IMR-90 (cell line): ENCODE measurements at regions of chr22 and their contacts with region 1.

Region 1: DNA sequence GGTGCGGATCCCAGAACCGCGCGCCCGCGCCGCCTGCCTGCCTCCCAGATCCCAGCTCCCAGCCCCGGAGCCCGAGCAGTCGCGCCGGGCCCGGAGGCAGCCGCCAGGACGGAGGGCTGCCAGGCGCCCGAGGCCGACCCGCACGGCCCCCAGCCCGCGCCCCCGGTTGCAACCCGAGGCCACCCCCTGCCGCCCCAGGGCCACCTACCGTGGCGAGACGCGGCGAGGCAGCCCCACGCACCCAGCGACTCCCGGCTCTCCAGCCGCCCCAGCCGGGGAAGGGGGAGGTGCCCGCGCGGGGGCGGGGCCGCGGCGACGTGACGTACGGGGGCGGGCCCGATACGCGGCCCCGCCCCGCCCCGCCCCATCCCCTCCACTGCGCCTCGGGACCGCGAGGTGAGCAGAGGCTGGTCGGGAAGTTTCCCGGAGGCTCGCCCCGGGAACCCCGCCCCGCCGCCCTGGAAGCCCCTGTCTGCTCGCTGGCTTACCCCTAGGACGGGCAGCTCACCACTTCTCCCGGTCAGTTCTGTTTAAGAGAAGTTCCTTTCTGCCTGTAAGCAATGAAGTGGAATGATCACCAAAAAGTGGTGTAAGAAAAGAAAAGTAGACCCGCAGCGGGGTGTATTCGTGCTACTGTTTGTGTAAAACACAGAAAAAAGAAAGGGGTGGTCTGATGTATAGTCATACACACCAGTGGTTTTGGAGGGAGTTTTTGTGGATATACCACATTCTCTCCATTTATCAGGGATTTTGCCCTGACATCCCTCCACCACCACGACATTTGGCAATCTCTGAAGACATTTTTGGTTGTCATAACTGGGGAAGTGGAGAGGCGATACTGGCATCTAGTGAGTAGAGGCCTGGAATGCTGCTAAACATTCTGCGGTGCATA is at the start of gene TPST2:
- DNase-seq: peak; percentile 65
- ATAC-seq: peak; percentile 97
- H3K4me3 ChIP-seq: peak within 1 kb of the TSS; percentile 95
- H3K27ac ChIP-seq: peak within 1 kb of the TSS; percentile 73
- H3K4me1 ChIP-seq: peaks cover 10% of the 10 kb centered on the region
- H3K27me3 ChIP-seq: peaks cover 9% of the 10 kb centered on the region
- CTCF ChIP-seq: no peak
- POLR2A ChIP-seq: peak; percentile 72
- RAD21 ChIP-seq: no peak
- total RNA-seq, gene TPST2: 41.7 and 42.5 TPM in 2 replicates

Region 2: GRCh38 chr22:26287382-26288225 is 302.5 kb before region 1 on chr22:
- CTCF ChIA-PET with region 1: no interaction called
- POLR2A ChIA-PET with region 1: no interaction called
- dilution Hi-C with region 1: no loop called
- in situ Hi-C with region 1: no loop called
- intact Hi-C with region 1: no loop called
- DNase-seq: no peak
- ATAC-seq: no peak
- H3K4me3 ChIP-seq: no peak overlapping the region
- H3K27ac ChIP-seq: no peak overlapping the region
- H3K4me1 ChIP-seq: no peaks in the 10 kb centered on the region
- H3K27me3 ChIP-seq: no peaks in the 10 kb centered on the region
- CTCF ChIP-seq: no peak
- POLR2A ChIP-seq: no peak
- RAD21 ChIP-seq: no peak

Region 3: DNA sequence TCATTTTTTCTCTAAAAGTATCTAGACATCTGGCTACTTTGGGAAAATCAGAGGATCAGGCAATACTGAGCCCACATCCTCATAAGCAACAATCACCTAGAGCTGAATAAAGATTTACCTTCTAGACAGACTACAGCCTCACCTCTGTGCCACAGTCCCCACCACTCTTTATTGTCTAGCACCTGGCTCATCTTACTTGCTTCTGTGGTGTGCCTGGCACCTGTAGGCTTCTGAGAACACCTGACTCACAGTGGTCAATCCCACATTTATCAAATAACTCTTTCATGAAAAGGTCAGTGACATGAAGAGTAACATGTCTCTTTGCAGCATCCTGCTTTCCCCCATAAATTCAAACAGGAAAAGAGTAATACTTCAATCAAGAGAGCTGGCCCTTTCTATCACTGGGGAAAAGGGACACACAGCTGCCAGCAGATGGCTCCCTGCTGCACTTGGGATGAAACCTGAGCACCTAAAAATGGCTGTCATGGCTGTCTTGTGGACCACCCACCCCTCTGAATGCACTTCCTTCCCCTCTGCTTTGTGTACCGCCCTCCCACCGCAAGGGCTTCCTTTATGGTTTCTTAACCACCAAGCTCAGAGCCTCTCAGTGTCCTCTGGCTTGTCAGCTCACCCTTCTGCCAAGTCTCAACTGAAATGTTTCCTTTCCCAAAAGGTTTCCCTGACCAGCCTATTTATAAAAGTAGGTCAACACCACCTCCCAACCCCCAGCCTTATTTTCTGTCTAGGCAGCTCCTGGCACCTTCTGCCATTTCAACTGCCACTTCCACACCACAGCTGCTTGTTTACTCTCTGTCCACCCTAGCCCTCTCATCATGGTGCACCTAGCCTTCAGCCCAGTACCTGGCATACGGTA is 87.2 kb before region 1 on chr22:
- CTCF ChIA-PET with region 1: interaction called, 4 read pairs
- POLR2A ChIA-PET with region 1: no interaction called
- dilution Hi-C with region 1: no loop called
- in situ Hi-C with region 1: no loop called
- intact Hi-C with region 1: loop called (anchors 5 kb)
- DNase-seq: peak; percentile 51
- ATAC-seq: peak; percentile 79
- H3K4me3 ChIP-seq: no peak overlapping the region
- H3K27ac ChIP-seq: no peak overlapping the region
- H3K4me1 ChIP-seq: no peaks in the 10 kb centered on the region
- H3K27me3 ChIP-seq: no peaks in the 10 kb centered on the region
- CTCF ChIP-seq: peak; percentile 56
- POLR2A ChIP-seq: no peak
- RAD21 ChIP-seq: peak; percentile 63

Region 4: GRCh38 chr22:26511857-26512793 is 78.0 kb before region 1 on chr22 and contains the start of gene TFIP11:
- CTCF ChIA-PET with region 1: no interaction called
- POLR2A ChIA-PET with region 1: no interaction called
- dilution Hi-C with region 1: no loop called
- in situ Hi-C with region 1: no loop called
- intact Hi-C with region 1: loop called (anchors 5 kb)
- DNase-seq: peak; percentile 90
- ATAC-seq: peak; percentile 95
- H3K4me3 ChIP-seq: peak within 1 kb of the TSS; percentile 96
- H3K27ac ChIP-seq: peak within 1 kb of the TSS; percentile 86
- H3K4me1 ChIP-seq: peaks cover 2% of the 10 kb centered on the region
- H3K27me3 ChIP-seq: no peaks in the 10 kb centered on the region
- CTCF ChIP-seq: 0 out of 2 replicates have a peak, but pooled peaks have one; percentile 9
- POLR2A ChIP-seq: peak; percentile 68; the same call in 1 of the 2 replicates
- RAD21 ChIP-seq: no peak; the same call in 1 of the 2 replicates
- total RNA-seq, gene TFIP11: 37.5 and 43.2 TPM in 2 replicates

Region 5: DNA sequence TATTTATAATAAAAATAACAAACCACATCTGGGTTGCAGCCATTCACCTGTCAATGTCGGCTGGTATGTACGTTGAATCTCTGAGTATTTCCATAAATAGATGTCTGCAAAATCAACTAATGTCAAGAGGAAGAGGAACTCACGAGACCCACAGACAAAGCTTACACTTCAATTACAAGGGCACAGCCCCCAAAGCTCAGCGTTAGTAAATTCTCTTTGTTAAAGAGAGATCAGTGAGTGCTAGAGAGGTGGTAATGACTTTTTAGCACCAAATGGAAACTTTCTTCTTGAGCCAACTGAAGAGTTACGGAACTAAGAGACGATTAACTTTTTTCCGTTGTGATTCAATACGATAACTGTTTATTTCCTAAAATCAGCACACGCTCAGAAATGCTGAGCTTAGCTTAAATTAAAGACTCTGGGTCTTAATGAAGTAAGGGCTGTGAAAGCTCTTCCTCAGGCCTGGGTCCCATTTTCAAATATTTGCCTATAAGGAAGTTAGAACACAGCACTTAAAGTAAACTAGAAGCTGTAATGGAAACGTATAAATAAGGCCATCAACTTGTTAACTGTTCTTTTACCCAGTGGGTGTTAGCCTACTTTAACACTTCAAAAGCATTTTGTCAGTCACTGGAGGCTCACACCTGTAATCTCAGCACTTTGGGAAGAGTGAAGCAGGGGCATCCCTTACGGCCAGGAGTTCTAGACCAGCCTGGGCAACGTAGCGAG is 55.1 kb before region 1 on chr22:
- CTCF ChIA-PET with region 1: no interaction called
- POLR2A ChIA-PET with region 1: no interaction called
- dilution Hi-C with region 1: no loop called
- in situ Hi-C with region 1: loop called (anchors 10 kb)
- intact Hi-C with region 1: no loop called
- DNase-seq: no peak
- ATAC-seq: no peak
- H3K4me3 ChIP-seq: no peak overlapping the region
- H3K27ac ChIP-seq: no peak overlapping the region
- H3K4me1 ChIP-seq: no peaks in the 10 kb centered on the region
- H3K27me3 ChIP-seq: no peaks in the 10 kb centered on the region
- CTCF ChIP-seq: no peak
- POLR2A ChIP-seq: no peak
- RAD21 ChIP-seq: no peak

Region 6: DNA sequence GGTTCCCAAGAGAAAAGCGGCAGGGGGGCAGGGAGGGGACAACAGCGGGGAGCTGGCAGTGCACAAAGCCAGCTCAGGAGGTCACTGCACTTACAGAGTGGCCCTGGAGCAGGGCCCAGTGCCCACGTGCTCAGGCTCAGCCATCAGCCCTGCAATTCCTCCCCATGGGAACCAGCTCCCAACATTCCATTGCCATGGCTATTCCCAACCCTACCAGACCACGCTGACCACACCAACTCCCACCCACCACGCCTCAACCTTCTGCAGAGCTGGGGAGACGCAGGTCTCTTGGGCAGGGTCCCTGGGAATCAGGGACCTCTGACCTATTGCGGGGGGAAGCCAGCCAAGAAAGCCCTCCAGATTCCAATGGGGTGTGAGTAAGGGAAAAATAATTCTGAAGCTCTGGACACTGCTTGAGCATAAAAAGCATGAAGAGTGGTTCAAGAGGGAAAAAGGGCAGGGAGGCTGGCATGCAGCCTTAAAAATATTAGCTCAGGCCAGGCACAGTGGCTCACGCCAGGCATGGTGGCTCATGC is 39.5 kb before region 1 on chr22:
- CTCF ChIA-PET with region 1: no interaction called
- POLR2A ChIA-PET with region 1: no interaction called
- dilution Hi-C with region 1: no loop called
- in situ Hi-C with region 1: no loop called
- intact Hi-C with region 1: no loop called
- DNase-seq: peak; percentile 98
- ATAC-seq: peak; percentile 81
- H3K4me3 ChIP-seq: no peak overlapping the region
- H3K27ac ChIP-seq: peak overlapping the region; percentile 23
- H3K4me1 ChIP-seq: peaks cover 23% of the 10 kb centered on the region
- H3K27me3 ChIP-seq: no peaks in the 10 kb centered on the region
- CTCF ChIP-seq: no peak
- POLR2A ChIP-seq: no peak; the same call in 1 of the 2 replicates
- RAD21 ChIP-seq: no peak; the same call in 1 of the 2 replicates

Region 7: GRCh38 chr22:26700886-26701285 is 110.8 kb after region 1 on chr22:
- CTCF ChIA-PET with region 1: no interaction called
- POLR2A ChIA-PET with region 1: no interaction called
- dilution Hi-C with region 1: no loop called
- in situ Hi-C with region 1: no loop called
- intact Hi-C with region 1: no loop called
- DNase-seq: no peak
- ATAC-seq: no peak
- H3K4me3 ChIP-seq: no peak overlapping the region
- H3K27ac ChIP-seq: no peak overlapping the region
- H3K4me1 ChIP-seq: peaks cover 2% of the 10 kb centered on the region; the same call in 1 of the 2 replicates
- H3K27me3 ChIP-seq: no peaks in the 10 kb centered on the region
- CTCF ChIP-seq: no peak
- POLR2A ChIP-seq: no peak
- RAD21 ChIP-seq: no peak